Activated CD8-positive, alpha-beta T cell treated with anti-CD3 and anti-CD28 coated beads, Interleukin-2, amount 10 ng/mL, durations not matched to agents 7 days and 5 days (primary cell): ENCODE measurements at regions of chr22 and their contacts with region 1.

Region 1: GRCh38 chr22:37525073-37525748 is 6.0 kb upstream of the CARD10 start:
- DNase-seq: no peak
- ATAC-seq: no peak
- H3K4me3 Mint-ChIP-seq: no peak overlapping the region
- H3K27ac Mint-ChIP-seq: no peak overlapping the region
- H3K4me1 Mint-ChIP-seq: peaks cover 12% of the 10 kb centered on the region
- H3K27me3 Mint-ChIP-seq: peaks cover 39% of the 10 kb centered on the region

Region 2: GRCh38 chr22:37538590-37539357 is 13.6 kb after region 1 on chr22:
- CTCF ChIA-PET with region 1: interaction called, 12 read pairs
- POLR2A ChIA-PET with region 1: no interaction called
- DNase-seq: peak; percentile 95
- ATAC-seq: peak; percentile 99
- H3K4me3 Mint-ChIP-seq: peak overlapping the region; percentile 3
- H3K27ac Mint-ChIP-seq: peak overlapping the region; percentile 20
- H3K4me1 Mint-ChIP-seq: peaks cover 52% of the 10 kb centered on the region
- H3K27me3 Mint-ChIP-seq: peaks cover 20% of the 10 kb centered on the region